AG04449 (cell line): ENCODE measurements at regions of chr11 and their contacts with region 1.

Region 1: DNA sequence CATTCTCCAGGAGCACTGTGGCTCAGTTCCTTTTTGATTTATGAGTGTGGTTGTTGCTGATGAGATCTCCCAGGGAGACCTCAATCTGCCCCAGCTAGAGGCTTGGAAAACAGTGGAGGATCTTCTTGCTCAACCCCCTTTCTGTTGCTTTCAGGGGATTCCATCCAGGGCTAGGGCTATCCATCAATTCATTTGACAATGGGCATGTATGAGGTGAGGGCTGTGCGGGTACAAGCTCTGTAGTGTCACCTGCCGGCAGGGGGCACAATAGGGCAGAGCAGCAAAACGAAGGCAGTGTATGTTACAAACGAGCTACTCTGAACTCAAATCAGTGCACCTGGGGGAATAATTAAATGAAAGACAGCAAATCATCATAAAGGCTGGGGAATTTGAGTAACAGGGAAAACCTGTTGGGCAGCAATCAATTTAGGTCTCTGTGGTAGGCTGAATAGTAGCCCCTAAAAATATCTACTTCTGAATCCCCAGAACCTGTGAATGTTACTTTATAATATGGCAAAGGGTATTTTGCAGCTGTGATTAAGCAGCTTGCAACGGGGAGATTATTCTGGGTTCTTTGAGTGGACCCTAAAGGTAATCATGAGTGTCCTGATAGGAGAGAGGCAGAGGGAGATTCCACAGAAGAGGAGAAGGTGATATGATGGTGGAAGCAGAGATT is 170.3 kb upstream of the ZBED5 start:
- DNase-seq: no peak
- H3K4me3 ChIP-seq: no peak overlapping the region
- CTCF ChIP-seq: peak; percentile 68

Region 2: GRCh38 chr11:10770626-10771254 is 257.4 kb before region 1 on chr11:
- CTCF ChIA-PET with region 1: interaction called, 24 read pairs
- POLR2A ChIA-PET with region 1: no interaction called
- DNase-seq: no peak
- H3K4me3 ChIP-seq: no peak overlapping the region
- CTCF ChIP-seq: peak; percentile 70

Region 3: GRCh38 chr11:10943968-10944367 is 84.2 kb before region 1 on chr11:
- CTCF ChIA-PET with region 1: interaction called, 18 read pairs
- POLR2A ChIA-PET with region 1: no interaction called
- DNase-seq: no peak
- H3K4me3 ChIP-seq: no peak overlapping the region
- CTCF ChIP-seq: no peak

Region 4: GRCh38 chr11:11016068-11016467 is 12.1 kb before region 1 on chr11:
- CTCF ChIA-PET with region 1: interaction called, 22 read pairs
- POLR2A ChIA-PET with region 1: no interaction called
- DNase-seq: no peak
- H3K4me3 ChIP-seq: no peak overlapping the region
- CTCF ChIP-seq: no peak

Region 5: DNA sequence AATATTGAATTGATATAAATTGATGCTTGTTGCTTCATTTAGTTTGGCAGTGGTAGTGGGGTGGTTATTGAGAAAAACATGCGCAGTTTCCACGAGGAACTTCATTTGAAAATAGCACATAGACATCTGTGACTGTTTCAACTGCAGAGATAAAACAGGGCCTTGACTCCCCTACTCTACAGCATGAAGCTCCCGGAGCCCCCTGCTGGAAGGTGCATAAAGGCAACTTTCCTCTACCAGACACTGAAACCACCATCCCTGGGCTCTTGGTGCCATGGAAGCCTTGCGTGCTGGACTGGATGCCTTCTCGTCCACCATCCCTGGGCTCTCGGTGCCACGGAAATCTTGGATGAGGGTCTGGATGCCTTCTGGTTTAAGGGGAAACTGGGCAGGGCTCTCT is 129.0 kb after region 1 on chr11:
- CTCF ChIA-PET with region 1: interaction called, 12 read pairs
- POLR2A ChIA-PET with region 1: no interaction called
- DNase-seq: no peak
- H3K4me3 ChIP-seq: no peak overlapping the region
- CTCF ChIP-seq: peak; percentile 59